ENCODE measurements at regions of chr16 and their contacts with region 1.

Region 1: DNA sequence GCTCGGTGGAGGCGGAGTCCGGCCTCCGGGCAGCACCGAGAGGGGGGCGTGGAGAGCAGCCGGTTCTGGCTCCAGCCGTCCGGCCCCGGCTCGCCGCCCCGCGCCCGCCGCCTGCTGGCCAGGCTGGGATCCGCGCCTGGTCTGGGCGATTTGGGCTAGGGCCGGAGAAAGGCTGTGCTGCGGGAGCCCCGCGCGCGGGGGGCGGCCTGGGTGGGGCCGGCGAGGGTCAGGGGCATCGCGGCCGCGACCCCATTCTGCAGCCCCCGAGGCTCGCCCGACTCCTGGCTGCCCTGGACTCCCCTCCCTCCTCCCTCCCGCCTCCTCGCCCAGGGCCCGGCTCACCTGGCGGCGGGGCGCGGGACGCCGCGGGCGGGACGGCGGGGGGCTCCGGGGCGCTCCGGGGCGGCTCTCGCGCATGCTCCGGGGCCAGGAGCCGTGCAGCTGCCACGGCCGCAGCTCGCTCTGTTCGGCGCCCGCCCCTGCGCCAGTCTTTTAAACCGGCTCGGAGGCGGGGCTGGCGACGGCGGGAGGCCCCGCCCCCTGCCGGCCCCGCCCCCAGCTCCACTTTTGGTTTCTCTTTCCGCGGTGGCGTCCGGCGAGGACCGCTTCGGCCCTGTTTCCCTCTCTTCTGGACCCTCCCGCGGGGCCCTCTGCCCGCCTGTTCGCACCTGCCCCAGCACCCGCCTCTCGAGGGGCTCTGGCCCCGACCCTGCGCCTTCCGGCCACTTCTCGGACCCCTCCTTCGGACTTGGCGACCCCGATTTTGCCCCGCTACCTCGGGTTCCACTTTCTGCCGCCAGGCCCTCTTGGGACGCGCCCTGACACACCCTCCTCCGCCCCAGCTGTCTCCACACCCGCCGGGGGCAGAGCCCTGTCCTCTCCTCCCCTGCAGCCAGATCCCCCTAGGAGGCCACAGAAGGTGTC is at the start of gene SOCS1:
- DNase-seq: peak; percentile 89
- H3K4me3 ChIP-seq: peak within 1 kb of the TSS; percentile 95
- H3K27ac ChIP-seq: peak within 1 kb of the TSS; percentile 61
- H3K4me1 ChIP-seq: peaks cover 53% of the 10 kb centered on the region
- CTCF ChIP-seq: peak; percentile 81
- total RNA-seq, gene SOCS1: 45.8 and 47.1 TPM in 2 replicates

Region 2: DNA sequence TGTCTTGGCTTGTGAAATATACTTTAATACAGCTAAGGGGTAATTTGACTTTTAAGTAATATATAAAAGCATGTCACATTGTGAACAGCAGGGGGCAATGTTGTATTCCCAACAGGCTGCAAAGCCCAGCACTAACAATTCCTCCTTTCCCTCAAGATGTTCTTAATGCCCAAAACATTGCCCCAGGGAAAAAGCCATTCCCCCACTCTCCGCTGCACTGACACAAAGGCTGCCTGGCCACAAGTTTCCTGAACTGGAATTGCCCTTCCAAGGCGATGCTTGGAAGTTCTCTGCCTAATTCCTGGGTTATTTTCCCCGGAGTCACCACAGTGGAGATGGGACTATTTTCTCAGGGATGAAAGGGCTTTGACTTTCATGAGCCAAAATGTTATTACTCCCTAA is 284.4 kb before region 1 on chr16:
- CTCF ChIA-PET with region 1: no interaction called
- POLR2A ChIA-PET with region 1: interaction called, 3 read pairs
- intact Hi-C with region 1: loop called (anchors 2 kb)
- DNase-seq: peak; percentile 66
- H3K4me3 ChIP-seq: no peak overlapping the region
- H3K27ac ChIP-seq: no peak overlapping the region
- H3K4me1 ChIP-seq: no peaks in the 10 kb centered on the region
- CTCF ChIP-seq: peak; percentile 91

Region 3: GRCh38 chr16:11224096-11224893 is 31.7 kb before region 1 on chr16:
- CTCF ChIA-PET with region 1: interaction called, 11 read pairs
- POLR2A ChIA-PET with region 1: interaction called, 8 read pairs
- intact Hi-C with region 1: no loop called
- DNase-seq: peak; percentile 63
- H3K4me3 ChIP-seq: peak overlapping the region; percentile 45
- H3K27ac ChIP-seq: peak overlapping the region; percentile 46
- H3K4me1 ChIP-seq: peaks cover 27% of the 10 kb centered on the region
- CTCF ChIP-seq: no peak

Region 4: GRCh38 chr16:11312718-11313492 is 56.9 kb after region 1 on chr16:
- CTCF ChIA-PET with region 1: no interaction called
- POLR2A ChIA-PET with region 1: interaction called, 18 read pairs
- intact Hi-C with region 1: loop called (anchors 1 kb)
- DNase-seq: no peak
- H3K4me3 ChIP-seq: no peak overlapping the region
- H3K27ac ChIP-seq: peak overlapping the region; percentile 99
- H3K4me1 ChIP-seq: peaks cover 79% of the 10 kb centered on the region
- CTCF ChIP-seq: no peak

Region 5: DNA sequence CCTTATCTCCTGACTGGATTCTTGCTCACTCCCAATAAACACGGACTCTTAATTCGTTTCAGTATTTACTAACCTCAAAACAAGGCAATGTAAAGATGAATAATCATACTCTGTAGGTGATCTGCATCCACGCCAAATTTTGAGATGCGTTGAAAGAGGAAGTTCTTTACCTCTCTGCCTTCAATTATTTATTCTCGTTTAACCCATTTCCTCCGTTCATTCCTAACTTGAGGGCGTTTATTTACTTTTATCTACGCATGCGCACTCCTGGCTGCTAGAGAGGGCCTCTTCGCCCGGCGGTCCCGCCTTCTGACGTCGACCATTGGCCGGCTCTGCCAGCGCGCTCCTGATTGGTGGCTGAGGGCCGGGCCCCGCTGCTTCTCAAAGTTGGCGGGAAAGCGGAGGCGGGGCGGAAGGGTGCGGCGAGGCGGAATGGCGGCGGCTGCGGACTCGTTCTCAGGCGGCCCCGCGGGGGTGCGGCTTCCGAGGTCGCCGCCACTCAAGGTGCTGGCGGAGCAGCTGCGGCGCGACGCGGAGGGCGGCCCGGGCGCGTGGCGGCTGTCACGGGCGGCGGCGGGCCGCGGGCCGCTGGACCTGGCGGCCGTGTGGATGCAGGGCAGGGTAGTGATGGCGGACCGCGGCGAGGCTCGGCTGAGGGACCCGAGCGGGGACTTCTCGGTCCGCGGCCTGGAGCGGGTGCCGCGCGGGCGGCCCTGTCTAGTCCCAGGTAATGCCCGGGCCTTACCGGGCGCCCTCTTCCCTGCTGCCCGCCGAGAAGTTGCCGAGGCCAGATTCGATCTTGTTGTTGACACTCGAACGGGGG is 89.3 kb after region 1 on chr16 and contains the start of gene RMI2:
- CTCF ChIA-PET with region 1: no interaction called
- POLR2A ChIA-PET with region 1: interaction called, 3 read pairs
- intact Hi-C with region 1: loop called (anchors 1 kb)
- DNase-seq: peak; percentile 99
- H3K4me3 ChIP-seq: peak within 1 kb of the TSS; percentile 96
- H3K27ac ChIP-seq: peak within 1 kb of the TSS; percentile 57
- H3K4me1 ChIP-seq: peaks cover 63% of the 10 kb centered on the region
- CTCF ChIP-seq: no peak
- total RNA-seq, gene RMI2: 60.4 and 84.5 TPM in 2 replicates

Measured in OCI-LY7 (cell line).